ENCODE measurements at regions of chr6 and their contacts with region 1.

Region 1: GRCh38 chr6:30463651-30464618 is 25.4 kb upstream of the HLA-E start:
- DNase-seq: peak; percentile 15
- ATAC-seq: peak; percentile 77
- H3K4me3 ChIP-seq: no peak overlapping the region
- H3K27ac ChIP-seq: no peak overlapping the region
- H3K4me1 ChIP-seq: peaks cover 5% of the 10 kb centered on the region; the same call in 1 of the 2 replicates
- H3K27me3 ChIP-seq: peaks cover 22 to 39% of the 10 kb centered on the region in 2 experiments
- CTCF ChIP-seq: no peak
- EP300 ChIP-seq: peak in 1 of 2 experiments; percentile 21; a peak in 1 of 4 replicates
- POLR2A ChIP-seq: no peak
- RAD21 ChIP-seq: no peak

Region 2: GRCh38 chr6:31094389-31094881 is 630.5 kb after region 1 on chr6:
- CTCF ChIA-PET with region 1: no interaction called
- POLR2A ChIA-PET with region 1: no interaction called
- RAD21 ChIA-PET with region 1: interaction called, 3 read pairs
- SMC1A ChIA-PET with region 1: interaction called, 3 read pairs
- in situ Hi-C with region 1: loop called (anchors 10 kb)
- intact Hi-C with region 1: no loop called
- DNase-seq: no peak
- ATAC-seq: no peak
- H3K4me3 ChIP-seq: no peak overlapping the region
- H3K27ac ChIP-seq: no peak overlapping the region
- H3K4me1 ChIP-seq: no peaks in the 10 kb centered on the region
- H3K27me3 ChIP-seq: peaks cover 0 to 2% of the 10 kb centered on the region in 2 experiments; a peak in 2 of 4 replicates
- CTCF ChIP-seq: no peak
- EP300 ChIP-seq: no peak
- POLR2A ChIP-seq: no peak
- RAD21 ChIP-seq: no peak